ENCODE measurements at regions of chr3 and their contacts with region 1.

Region 1: DNA sequence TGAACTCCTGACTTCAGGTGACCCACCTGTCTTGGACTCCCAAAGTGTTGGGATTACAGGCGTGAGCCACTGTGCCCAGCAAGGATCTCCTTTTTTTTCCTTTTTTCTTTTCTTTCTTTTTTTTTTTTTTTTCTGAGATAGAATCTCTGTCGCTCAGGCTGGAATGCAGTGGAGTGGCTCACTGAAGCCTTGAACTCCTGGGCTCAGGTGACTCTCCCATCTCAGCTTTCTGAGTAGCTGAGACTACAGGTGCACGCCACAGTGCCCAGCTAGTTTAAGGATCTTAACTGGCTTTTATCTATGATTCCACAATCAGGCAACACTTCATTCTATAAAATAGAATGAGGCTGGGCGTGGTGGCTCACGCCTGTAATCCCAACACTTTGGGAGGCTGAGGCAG is 16.3 kb upstream of the NICN1 start:
- DNase-seq: no peak
- ATAC-seq: no peak
- H3K4me3 ChIP-seq: no peak overlapping the region
- H3K27ac ChIP-seq: no peak overlapping the region
- H3K4me1 ChIP-seq: peaks cover 17% of the 10 kb centered on the region
- H3K27me3 ChIP-seq: no peaks in the 10 kb centered on the region
- CTCF ChIP-seq: no peak
- EP300 ChIP-seq: no peak
- POLR2A ChIP-seq: no peak
- RAD21 ChIP-seq: no peak

Region 2: DNA sequence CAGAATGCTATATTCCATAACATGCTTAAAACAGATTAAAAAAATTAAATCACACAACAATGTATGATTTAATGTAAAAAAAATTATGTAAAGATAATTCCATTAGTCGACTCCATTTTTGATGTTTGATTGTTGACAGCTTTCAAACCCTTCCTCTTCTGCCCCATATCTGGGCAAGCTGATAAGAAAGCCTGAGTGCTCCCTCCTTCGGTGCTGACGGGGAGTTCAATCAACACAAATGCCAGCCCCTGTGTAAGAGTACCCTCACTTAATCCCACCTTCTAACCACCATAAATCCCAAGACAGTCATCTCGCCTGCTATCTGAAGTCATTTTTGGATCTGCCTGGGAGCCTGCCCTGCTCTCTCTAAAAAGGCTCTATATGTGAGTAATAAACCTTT is 668.5 kb before region 1 on chr3:
- CTCF ChIA-PET with region 1: no interaction called
- POLR2A ChIA-PET with region 1: no interaction called
- RAD21 ChIA-PET with region 1: no interaction called
- SMC1A ChIA-PET with region 1: no interaction called
- in situ Hi-C with region 1: no loop called
- intact Hi-C with region 1: no loop called
- DNase-seq: no peak
- ATAC-seq: no peak
- H3K4me3 ChIP-seq: no peak overlapping the region
- H3K27ac ChIP-seq: no peak overlapping the region
- H3K4me1 ChIP-seq: no peaks in the 10 kb centered on the region
- H3K27me3 ChIP-seq: no peaks in the 10 kb centered on the region
- CTCF ChIP-seq: no peak
- EP300 ChIP-seq: no peak
- POLR2A ChIP-seq: no peak
- RAD21 ChIP-seq: no peak

Region 3: GRCh38 chr3:49165771-49166751 is 279.3 kb before region 1 on chr3 and contains the start of gene CCDC71:
- CTCF ChIA-PET with region 1: interaction called, 59 read pairs
- POLR2A ChIA-PET with region 1: interaction called, 6 read pairs
- RAD21 ChIA-PET with region 1: interaction called, 17 read pairs
- SMC1A ChIA-PET with region 1: interaction called, 14 read pairs
- in situ Hi-C with region 1: loop called (anchors 5 kb)
- intact Hi-C with region 1: loop called (anchors 1 kb)
- DNase-seq: peak; percentile 20
- ATAC-seq: peak; percentile 91
- H3K4me3 ChIP-seq: peak within 1 kb of the TSS; percentile 84
- H3K27ac ChIP-seq: peak within 1 kb of the TSS; percentile 65
- H3K4me1 ChIP-seq: peaks cover 10% of the 10 kb centered on the region
- H3K27me3 ChIP-seq: no peaks in the 10 kb centered on the region
- CTCF ChIP-seq: no peak
- EP300 ChIP-seq: no peak
- POLR2A ChIP-seq: peak; percentile 89
- RAD21 ChIP-seq: no peak
- polyA plus RNA-seq, gene CCDC71: 0.20 to 0.24 TPM

Region 4: GRCh38 chr3:49171119-49171774 is 274.1 kb before region 1 on chr3 and contains the start of gene KLHDC8B:
- CTCF ChIA-PET with region 1: interaction called, 59 read pairs
- POLR2A ChIA-PET with region 1: interaction called, 6 read pairs
- RAD21 ChIA-PET with region 1: interaction called, 17 read pairs
- SMC1A ChIA-PET with region 1: interaction called, 14 read pairs
- in situ Hi-C with region 1: loop called (anchors 5 kb)
- intact Hi-C with region 1: loop called (anchors 1 kb)
- DNase-seq: peak; percentile 12
- ATAC-seq: peak; percentile 90
- H3K4me3 ChIP-seq: peak within 1 kb of the TSS; percentile 74
- H3K27ac ChIP-seq: no peak within 1 kb of the TSS
- H3K4me1 ChIP-seq: peaks cover 5% of the 10 kb centered on the region
- H3K27me3 ChIP-seq: no peaks in the 10 kb centered on the region
- CTCF ChIP-seq: peak; percentile 93 to 96 (median 96)
- EP300 ChIP-seq: no peak
- POLR2A ChIP-seq: peak; percentile 53
- RAD21 ChIP-seq: peak; percentile 69
- polyA plus RNA-seq, gene KLHDC8B: 0.40 TPM in 1 of 2 experiments, not detected in the other

Region 5: GRCh38 chr3:49351521-49352011 is 93.8 kb before region 1 on chr3:
- CTCF ChIA-PET with region 1: interaction called, 11 read pairs
- POLR2A ChIA-PET with region 1: interaction called, 7 read pairs
- RAD21 ChIA-PET with region 1: interaction called, 6 read pairs
- SMC1A ChIA-PET with region 1: no interaction called
- in situ Hi-C with region 1: loop called (anchors 5 kb)
- intact Hi-C with region 1: no loop called
- DNase-seq: no peak
- ATAC-seq: peak; percentile 45
- H3K4me3 ChIP-seq: no peak overlapping the region
- H3K27ac ChIP-seq: peak overlapping the region; percentile 38; the same call in 1 of the 2 replicates
- H3K4me1 ChIP-seq: peaks cover 27% of the 10 kb centered on the region
- H3K27me3 ChIP-seq: no peaks in the 10 kb centered on the region
- CTCF ChIP-seq: no peak
- EP300 ChIP-seq: no peak
- POLR2A ChIP-seq: no peak
- RAD21 ChIP-seq: no peak

Region 6: DNA sequence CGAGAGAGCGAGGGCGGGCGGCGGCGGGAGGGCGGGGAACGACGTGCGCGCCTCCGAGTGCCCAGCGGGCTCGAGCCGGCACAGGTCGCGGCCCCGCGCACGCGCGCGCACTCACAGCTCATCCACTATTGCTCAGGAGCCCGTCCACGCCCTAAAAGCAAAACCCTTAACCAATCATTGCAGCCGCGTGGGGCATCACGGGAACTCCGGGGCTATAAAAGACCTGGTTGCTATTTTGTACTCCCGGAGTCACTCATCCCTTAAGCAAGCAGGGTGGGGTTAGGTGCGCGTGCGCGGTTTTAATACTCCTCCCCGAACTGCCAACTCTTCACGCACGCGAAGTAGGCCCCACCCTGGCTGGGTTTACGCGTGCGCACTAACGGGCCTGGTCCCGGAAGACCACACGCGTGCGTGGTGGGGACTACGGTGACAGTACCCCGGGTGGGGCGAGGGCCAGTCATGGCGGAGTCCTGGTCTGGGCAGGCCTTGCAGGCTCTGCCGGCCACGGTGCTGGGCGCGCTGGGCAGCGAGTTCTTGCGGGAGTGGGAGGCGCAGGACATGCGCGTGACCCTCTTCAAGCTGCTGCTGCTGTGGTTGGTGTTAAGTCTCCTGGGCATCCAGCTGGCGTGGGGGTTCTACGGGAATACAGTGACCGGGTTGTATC is 33.3 kb before region 1 on chr3 and contains the starts of genes RHOA and TCTA:
- CTCF ChIA-PET with region 1: interaction called, 48 read pairs
- POLR2A ChIA-PET with region 1: interaction called, 15 read pairs
- RAD21 ChIA-PET with region 1: interaction called, 35 read pairs
- SMC1A ChIA-PET with region 1: interaction called, 37 read pairs
- in situ Hi-C with region 1: no loop called
- intact Hi-C with region 1: loop called (anchors 1 kb)
- DNase-seq: peak; percentile 99
- ATAC-seq: peak; percentile 88
- H3K4me3 ChIP-seq: peak within 1 kb of the TSS; percentile 93
- H3K27ac ChIP-seq: peak within 1 kb of the TSS; percentile 96
- H3K4me1 ChIP-seq: peaks cover 31% of the 10 kb centered on the region
- H3K27me3 ChIP-seq: no peaks in the 10 kb centered on the region
- CTCF ChIP-seq: no peak
- EP300 ChIP-seq: no peak
- POLR2A ChIP-seq: peak; percentile 96
- RAD21 ChIP-seq: no peak
- polyA plus RNA-seq, gene RHOA: 696 to 1,049 TPM
- polyA plus RNA-seq, gene TCTA: 6.5 to 7.1 TPM

Region 7: DNA sequence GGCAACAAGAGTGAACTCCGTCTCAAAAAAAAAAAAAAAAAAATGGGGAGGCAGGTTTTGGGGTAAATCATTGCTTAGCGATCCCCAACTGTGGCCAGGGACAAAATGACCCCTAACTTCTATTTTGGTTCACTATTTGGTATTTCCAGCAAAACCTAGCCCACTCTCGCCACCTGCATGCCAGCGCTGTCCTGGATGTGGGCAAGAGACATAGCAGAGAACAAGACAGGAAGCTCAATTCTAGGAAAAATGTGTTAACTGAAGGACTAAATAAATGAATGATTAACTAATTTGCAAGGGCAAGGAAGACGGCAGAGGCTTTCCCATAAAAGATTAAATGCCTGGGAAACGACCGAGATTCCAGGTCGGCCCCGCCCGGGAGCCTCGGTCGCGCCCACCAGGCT is 16.7 kb before region 1 on chr3:
- CTCF ChIA-PET with region 1: interaction called, 14 read pairs
- POLR2A ChIA-PET with region 1: interaction called, 28 read pairs
- RAD21 ChIA-PET with region 1: interaction called, 9 read pairs
- SMC1A ChIA-PET with region 1: interaction called, 11 read pairs
- in situ Hi-C with region 1: no loop called
- intact Hi-C with region 1: no loop called
- DNase-seq: no peak
- ATAC-seq: peak; percentile 10
- H3K4me3 ChIP-seq: peak overlapping the region; percentile 59
- H3K27ac ChIP-seq: peak overlapping the region; percentile 84
- H3K4me1 ChIP-seq: no peaks in the 10 kb centered on the region; the same call in 1 of the 2 replicates
- H3K27me3 ChIP-seq: no peaks in the 10 kb centered on the region
- CTCF ChIP-seq: no peak
- EP300 ChIP-seq: no peak
- POLR2A ChIP-seq: no peak
- RAD21 ChIP-seq: 0 out of 2 replicates have a peak, but pooled peaks have one; percentile 3

Region 8: GRCh38 chr3:49469936-49470713 is 24.7 kb after region 1 on chr3 and contains the start of gene DAG1:
- CTCF ChIA-PET with region 1: interaction called, 12 read pairs
- POLR2A ChIA-PET with region 1: interaction called, 3 read pairs
- RAD21 ChIA-PET with region 1: interaction called, 17 read pairs
- SMC1A ChIA-PET with region 1: no interaction called
- in situ Hi-C with region 1: no loop called
- intact Hi-C with region 1: no loop called
- DNase-seq: peak; percentile 75
- ATAC-seq: peak; percentile 94
- H3K4me3 ChIP-seq: peak within 1 kb of the TSS; percentile 91
- H3K27ac ChIP-seq: peak within 1 kb of the TSS; percentile 95
- H3K4me1 ChIP-seq: peaks cover 17% of the 10 kb centered on the region
- H3K27me3 ChIP-seq: no peaks in the 10 kb centered on the region
- CTCF ChIP-seq: no peak
- EP300 ChIP-seq: 0 out of 4 replicates have a peak, but pooled peaks of 1 of the 2 experiments have one; percentile 15
- POLR2A ChIP-seq: peak; percentile 90
- RAD21 ChIP-seq: no peak
- polyA plus RNA-seq, gene DAG1: 0.33 to 0.37 TPM

Measured in GM12878 (cell line).